ENCODE measurements at regions of chr19 and their contacts with region 1.

Region 1: DNA sequence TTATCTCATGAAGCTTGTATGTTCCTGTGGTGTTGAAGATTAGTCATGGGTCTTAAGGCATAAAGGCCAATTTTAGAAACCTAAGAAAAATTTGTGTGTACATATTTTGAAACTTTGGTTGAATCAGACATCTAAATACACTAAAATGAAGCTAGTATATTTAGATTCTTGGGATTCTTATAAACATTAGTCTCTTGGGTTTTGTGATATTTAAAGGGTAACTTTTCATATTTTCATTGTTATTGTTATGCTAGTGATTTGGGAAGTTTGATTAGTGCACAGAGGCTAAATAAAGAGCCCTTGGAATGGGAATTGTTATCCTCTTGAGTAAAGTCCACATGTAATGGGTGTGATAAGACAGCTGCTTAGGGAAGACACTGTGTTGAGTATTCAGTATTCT is 24.5 kb downstream of the UBA2 start:
- DNase-seq: no peak
- H3K4me3 ChIP-seq: no peak overlapping the region
- H3K27me3 ChIP-seq: no peaks in the 10 kb centered on the region
- CTCF ChIP-seq: no peak

Region 2: DNA sequence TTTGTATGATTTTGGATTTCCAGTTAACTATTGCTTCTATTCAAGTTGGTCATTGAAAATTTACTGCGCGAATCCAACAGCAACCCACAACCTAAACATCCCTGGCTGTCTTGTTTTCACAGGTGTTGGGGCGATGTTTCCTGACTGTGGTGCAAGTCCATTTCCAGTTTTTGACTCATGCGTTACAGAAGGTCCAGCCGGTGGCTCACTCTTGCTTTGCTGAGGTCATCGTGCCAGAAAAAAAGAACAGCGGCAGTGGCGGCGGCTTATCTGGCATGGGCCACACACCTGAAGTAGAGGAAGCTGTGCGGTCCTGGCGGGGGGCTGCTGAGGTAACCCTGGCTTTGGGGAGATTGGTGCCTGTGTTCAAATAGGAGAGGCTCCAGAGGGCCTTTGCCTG is 132.9 kb before region 1 on chr19:
- CTCF ChIA-PET with region 1: no interaction called
- POLR2A ChIA-PET with region 1: no interaction called
- DNase-seq: no peak
- H3K4me3 ChIP-seq: no peak overlapping the region
- H3K27me3 ChIP-seq: no peaks in the 10 kb centered on the region
- CTCF ChIP-seq: no peak

Region 3: DNA sequence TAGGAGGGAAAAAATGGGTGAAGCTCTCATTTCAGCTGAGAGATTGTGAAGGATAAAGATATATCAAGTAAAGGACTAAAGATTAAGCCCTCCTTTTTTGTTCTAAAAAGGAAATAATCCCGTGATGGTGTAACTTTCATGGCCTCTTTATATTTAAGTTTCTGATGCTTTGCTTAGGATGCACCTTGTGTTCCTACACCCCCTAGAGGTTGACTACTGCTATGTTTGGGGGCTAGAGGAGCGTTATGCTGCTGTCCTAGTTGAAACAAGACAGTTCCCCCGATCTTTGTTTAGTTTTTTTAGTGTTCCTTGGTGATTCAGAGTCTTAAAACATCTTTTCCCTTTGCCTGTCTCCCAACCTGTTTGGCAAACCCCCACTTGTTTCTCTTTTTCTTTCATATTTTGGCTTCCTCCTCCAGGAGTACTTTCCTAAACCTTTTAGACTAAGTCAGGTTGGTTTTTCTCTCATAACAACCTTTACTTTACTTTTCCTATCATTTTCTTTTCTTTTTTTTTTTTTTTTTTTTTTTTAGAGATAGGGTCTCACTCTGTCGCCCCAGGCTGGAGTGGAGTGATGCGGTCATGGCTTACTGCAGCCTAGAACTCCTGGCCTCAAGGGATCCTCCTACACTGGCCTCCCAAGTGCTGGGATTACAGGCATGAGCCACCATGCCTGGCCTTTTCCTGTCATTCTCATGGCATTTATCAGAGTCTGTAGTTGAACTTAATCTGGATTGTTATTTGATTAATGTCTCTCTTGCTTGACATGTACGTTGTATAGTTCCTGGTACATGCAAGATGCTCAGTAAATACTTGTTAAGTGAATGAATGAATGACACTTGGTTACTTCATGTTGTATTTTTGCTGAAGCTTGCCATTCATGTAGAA is 21.7 kb before region 1 on chr19:
- CTCF ChIA-PET with region 1: interaction called, 10 read pairs
- POLR2A ChIA-PET with region 1: interaction called, 3 read pairs
- DNase-seq: no peak
- H3K4me3 ChIP-seq: no peak overlapping the region
- H3K27me3 ChIP-seq: no peaks in the 10 kb centered on the region
- CTCF ChIP-seq: peak; percentile 80